CD4-positive, alpha-beta T cell (primary cell): ENCODE measurements at regions of chr4 and their contacts with region 1.

Region 1: DNA sequence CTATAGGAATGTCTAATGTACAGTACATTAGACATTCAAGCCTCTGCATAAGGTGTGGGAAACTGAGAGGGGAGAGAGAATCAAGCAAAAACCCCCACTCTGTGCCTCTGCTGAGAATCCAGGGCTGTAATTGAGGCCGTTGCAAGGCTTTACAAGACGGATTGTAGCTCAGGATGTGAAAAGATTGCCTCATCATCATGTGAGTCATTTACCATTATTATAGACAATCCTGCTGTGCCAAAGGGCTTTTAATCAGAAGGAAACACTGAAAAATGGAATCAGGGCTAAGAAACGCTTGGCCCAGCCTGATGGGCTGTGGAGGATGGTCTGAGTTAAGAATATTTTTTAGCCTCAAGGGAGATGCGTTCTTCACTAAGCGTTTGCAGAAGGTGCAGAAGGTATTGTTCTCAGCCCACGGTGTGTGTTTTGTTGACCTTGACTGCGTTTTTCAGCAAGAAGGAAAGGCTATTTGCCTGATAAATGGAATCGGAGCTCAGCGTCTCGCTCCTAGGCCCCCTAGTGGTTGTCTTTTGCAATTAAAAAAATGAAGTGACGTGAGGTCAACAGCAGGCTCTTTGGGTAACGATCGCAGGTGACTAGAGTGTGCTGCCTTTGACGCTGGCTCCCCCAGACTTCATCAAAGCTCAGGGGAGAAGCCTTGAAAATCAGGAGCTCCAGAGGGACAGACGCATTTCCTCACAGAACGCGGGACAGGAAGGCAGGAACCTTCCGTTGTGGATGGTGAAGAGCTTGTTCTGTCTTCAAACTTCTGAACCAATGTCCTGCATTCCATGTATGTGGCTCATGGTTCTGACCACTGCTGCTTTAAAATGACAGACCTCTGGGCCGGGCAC is 18.1 kb upstream of the CHRNA9 start:
- DNase-seq: peak in 13 of 14 experiments; percentile 34 to 88 (median 54)
- ATAC-seq: peak; percentile 67
- H3K4me3 ChIP-seq: peak overlapping the region; percentile 54
- H3K4me3 Mint-ChIP-seq: peak overlapping the region; percentile 83
- H3K27ac ChIP-seq: peak overlapping the region; percentile 69 to 80
- H3K27ac Mint-ChIP-seq: peak overlapping the region; percentile 91
- H3K4me1 ChIP-seq: peaks cover 20% of the 10 kb centered on the region
- H3K4me1 Mint-ChIP-seq: peaks cover 57% of the 10 kb centered on the region
- H3K27me3 ChIP-seq: no peaks in the 10 kb centered on the region
- H3K27me3 Mint-ChIP-seq: no peaks in the 10 kb centered on the region
- CTCF ChIP-seq: peak; percentile 86

Region 2: GRCh38 chr4:40283968-40284367 is 33.0 kb before region 1 on chr4:
- CTCF ChIA-PET with region 1: interaction called, 29 read pairs
- POLR2A ChIA-PET with region 1: interaction called, 10 read pairs
- intact Hi-C with region 1: no loop called
- DNase-seq: peak; percentile 58 to 93 (median 78)
- ATAC-seq: peak; percentile 97
- H3K4me3 ChIP-seq: no peak overlapping the region
- H3K4me3 Mint-ChIP-seq: peak overlapping the region; percentile 82
- H3K27ac ChIP-seq: peak overlapping the region; percentile 33 to 60
- H3K27ac Mint-ChIP-seq: peak overlapping the region; percentile 85
- H3K4me1 ChIP-seq: peaks cover 47% of the 10 kb centered on the region
- H3K4me1 Mint-ChIP-seq: peaks cover 76% of the 10 kb centered on the region
- H3K27me3 ChIP-seq: no peaks in the 10 kb centered on the region
- H3K27me3 Mint-ChIP-seq: no peaks in the 10 kb centered on the region
- CTCF ChIP-seq: peak; percentile 49